Activated naive CD4-positive, alpha-beta T cell treated with anti-CD3 and anti-CD28 coated beads for 36 hours (primary cell): ENCODE measurements at regions of chr15 and their contacts with region 1.

Region 1: GRCh38 chr15:44545913-44546802 is 9.2 kb downstream of the EIF3J start:
- DNase-seq: peak; percentile 74
- H3K4me3 Mint-ChIP-seq: peak overlapping the region; percentile 46
- H3K27ac Mint-ChIP-seq: peak overlapping the region; percentile 84
- H3K4me1 Mint-ChIP-seq: peaks cover 59% of the 10 kb centered on the region
- H3K27me3 Mint-ChIP-seq: no peaks in the 10 kb centered on the region

Region 2: DNA sequence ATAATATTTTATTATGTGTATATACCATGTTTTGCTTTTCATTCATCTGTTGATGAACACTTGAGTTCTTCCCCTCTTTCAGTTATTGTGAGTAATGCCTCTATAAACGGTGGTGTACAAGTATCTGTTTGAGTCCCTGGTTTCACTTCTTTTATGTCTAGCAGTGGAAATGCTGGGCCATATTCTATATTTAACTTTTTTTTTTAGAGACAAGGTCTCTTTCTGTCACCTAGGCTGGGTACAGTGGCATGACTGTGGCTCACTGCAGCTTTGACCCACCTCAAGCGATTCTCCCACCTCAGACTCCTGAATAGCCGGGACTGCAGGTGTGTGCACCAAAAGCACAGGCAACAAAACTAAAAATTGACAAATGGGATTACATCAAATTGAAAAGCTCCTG is 237.7 kb before region 1 on chr15:
- CTCF ChIA-PET with region 1: no interaction called
- intact Hi-C with region 1: loop called (anchors 1 kb)
- DNase-seq: peak; percentile 30
- H3K4me3 Mint-ChIP-seq: peak overlapping the region; percentile 43
- H3K27ac Mint-ChIP-seq: peak overlapping the region; percentile 81
- H3K4me1 Mint-ChIP-seq: peaks cover 37% of the 10 kb centered on the region
- H3K27me3 Mint-ChIP-seq: no peaks in the 10 kb centered on the region

Region 3: DNA sequence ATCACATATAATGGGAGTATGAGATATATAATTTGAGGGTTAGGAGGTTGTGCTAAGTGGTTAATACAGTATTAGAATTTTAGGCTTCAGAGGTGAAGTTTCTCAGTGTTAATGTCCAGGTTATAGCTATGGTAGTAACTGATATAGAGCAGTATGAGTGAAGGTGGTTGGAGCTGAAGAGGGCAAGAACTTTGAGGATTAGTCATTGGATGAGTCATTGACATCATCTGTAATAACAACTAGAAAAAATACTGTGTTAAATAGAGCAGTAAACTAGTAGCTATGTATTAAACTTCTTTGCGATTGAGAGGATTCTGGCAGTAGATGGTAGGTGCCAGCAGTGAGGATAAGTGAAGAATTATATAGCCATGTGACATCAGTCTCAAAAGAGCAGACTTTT is 56.7 kb before region 1 on chr15:
- CTCF ChIA-PET with region 1: no interaction called
- intact Hi-C with region 1: loop called (anchors 2 kb)
- DNase-seq: no peak
- H3K4me3 Mint-ChIP-seq: no peak overlapping the region
- H3K27ac Mint-ChIP-seq: no peak overlapping the region
- H3K4me1 Mint-ChIP-seq: peaks cover 41% of the 10 kb centered on the region
- H3K27me3 Mint-ChIP-seq: no peaks in the 10 kb centered on the region

Region 4: GRCh38 chr15:44593042-44593736 is 47.0 kb after region 1 on chr15:
- CTCF ChIA-PET with region 1: interaction called, 5 read pairs
- intact Hi-C with region 1: loop called (anchors 2 kb)
- DNase-seq: peak; percentile 31
- H3K4me3 Mint-ChIP-seq: no peak overlapping the region
- H3K27ac Mint-ChIP-seq: no peak overlapping the region
- H3K4me1 Mint-ChIP-seq: peaks cover 22% of the 10 kb centered on the region
- H3K27me3 Mint-ChIP-seq: no peaks in the 10 kb centered on the region

Region 5: DNA sequence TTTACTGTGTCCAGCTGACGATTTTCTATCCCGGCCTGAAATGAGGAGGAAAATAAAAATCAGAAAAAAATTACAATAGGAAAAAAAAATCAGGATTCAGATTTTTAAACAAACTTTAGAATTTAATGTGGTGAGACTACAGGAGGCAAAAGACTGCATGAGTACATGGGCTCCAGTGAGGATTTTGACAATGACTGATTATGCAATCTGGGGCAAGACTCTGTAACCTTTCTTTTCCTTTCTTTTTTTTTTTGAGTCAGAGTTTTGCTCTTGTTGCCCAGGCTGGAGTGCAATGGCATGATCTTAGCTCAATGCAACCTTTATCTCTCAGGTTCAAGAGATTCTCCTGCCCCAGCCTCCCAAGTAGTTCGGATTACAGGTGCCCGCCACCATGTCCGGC is 87.4 kb after region 1 on chr15:
- CTCF ChIA-PET with region 1: no interaction called
- intact Hi-C with region 1: loop called (anchors 1 kb)
- DNase-seq: peak; percentile 34
- H3K4me3 Mint-ChIP-seq: peak overlapping the region; percentile 65
- H3K27ac Mint-ChIP-seq: peak overlapping the region; percentile 98
- H3K4me1 Mint-ChIP-seq: peaks cover 34% of the 10 kb centered on the region
- H3K27me3 Mint-ChIP-seq: no peaks in the 10 kb centered on the region

Region 6: DNA sequence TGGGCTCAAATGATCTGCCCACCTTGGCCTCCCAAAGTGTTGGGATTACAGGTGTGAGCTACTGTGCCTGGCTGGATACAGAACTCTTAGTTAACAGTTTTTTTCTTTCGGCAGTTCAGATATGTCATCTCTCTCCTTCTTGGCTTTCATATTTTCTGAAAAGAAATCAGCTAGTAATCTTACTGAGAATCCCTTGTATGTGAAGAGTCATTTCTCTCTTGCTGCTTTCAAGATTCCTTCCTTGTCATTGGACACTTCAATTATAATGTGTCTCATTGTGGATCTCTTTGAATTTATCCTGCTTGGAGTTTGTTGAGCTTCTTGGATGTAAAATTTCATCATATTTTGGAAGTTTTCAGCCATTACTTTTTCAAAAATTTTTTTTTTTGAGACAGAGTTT is 207.2 kb after region 1 on chr15:
- CTCF ChIA-PET with region 1: no interaction called
- intact Hi-C with region 1: loop called (anchors 1 kb)
- DNase-seq: no peak
- H3K4me3 Mint-ChIP-seq: no peak overlapping the region
- H3K27ac Mint-ChIP-seq: no peak overlapping the region
- H3K4me1 Mint-ChIP-seq: peaks cover 27% of the 10 kb centered on the region
- H3K27me3 Mint-ChIP-seq: no peaks in the 10 kb centered on the region

Region 7: DNA sequence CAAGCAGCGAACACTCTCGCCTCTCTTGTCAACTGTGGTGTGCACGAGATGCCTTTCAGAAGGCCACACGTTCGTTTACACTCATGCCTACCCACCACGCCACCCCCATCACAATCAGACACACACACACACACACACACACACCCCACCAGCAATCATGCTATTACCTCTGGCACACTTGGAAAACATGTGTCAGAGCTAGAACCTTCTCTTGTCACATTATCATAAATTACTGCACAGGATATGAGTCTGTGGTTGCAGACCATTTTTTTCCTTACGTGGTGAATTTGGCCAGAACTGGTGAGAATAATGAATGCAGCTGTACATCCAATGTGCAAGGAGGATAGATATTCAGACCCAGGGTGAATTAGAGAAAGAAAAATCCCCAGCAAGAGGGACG is 242.6 kb after region 1 on chr15:
- CTCF ChIA-PET with region 1: no interaction called
- intact Hi-C with region 1: loop called (anchors 1 kb)
- DNase-seq: peak; percentile 73
- H3K4me3 Mint-ChIP-seq: no peak overlapping the region
- H3K27ac Mint-ChIP-seq: peak overlapping the region; percentile 81
- H3K4me1 Mint-ChIP-seq: peaks cover 41% of the 10 kb centered on the region
- H3K27me3 Mint-ChIP-seq: no peaks in the 10 kb centered on the region